ENCODE measurements at regions of chr2 and their contacts with region 1.

Region 1: DNA sequence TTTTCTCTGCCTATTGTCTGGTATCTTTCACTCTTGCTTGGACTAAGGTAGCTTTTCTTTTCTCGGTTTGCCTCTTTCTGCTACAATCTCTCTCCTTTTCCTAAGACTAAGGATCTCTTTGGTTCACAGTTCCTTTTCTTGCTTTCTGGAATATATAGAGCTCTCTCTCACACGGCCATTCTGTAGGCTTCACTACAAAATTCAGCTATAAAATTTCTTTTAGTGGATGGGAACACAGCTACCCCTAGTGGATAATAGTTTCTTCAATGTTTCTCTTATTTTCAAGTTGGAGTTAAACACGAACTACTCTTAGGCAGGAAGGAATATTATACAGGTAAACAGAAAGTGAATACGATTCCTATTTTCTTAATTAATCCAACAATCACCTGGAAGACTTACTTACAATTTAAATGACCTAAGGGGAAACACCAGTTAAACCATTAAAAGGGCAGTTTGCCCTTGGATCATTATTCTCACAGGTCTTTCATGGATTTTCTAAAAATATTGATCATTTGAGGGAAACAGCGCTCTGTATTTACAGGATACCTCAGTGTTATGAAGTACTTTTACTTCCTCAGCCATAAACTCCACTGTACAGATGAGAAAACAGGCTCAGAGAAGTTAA is 140.5 kb downstream of the LRP2 start:
- DNase-seq: peak in 1 of 5 donors; percentile 15
- H3K4me3 ChIP-seq: no peak overlapping the region
- H3K4me3 Mint-ChIP-seq: no peak overlapping the region
- H3K27ac ChIP-seq: no peak overlapping the region
- H3K27ac Mint-ChIP-seq: no peak overlapping the region
- H3K4me1 ChIP-seq: no peaks in the 10 kb centered on the region
- H3K4me1 Mint-ChIP-seq: peaks cover 0 to 4% (median 0%) of the 10 kb centered on the region in 4 donors
- H3K27me3 ChIP-seq: no peaks in the 10 kb centered on the region
- H3K27me3 Mint-ChIP-seq: peaks cover 0 to 1% of the 10 kb centered on the region in 2 donors

Region 2: GRCh38 chr2:168948621-168949212 is 273.1 kb before region 1 on chr2:
- CTCF ChIA-PET with region 1: no interaction called
- POLR2A ChIA-PET with region 1: no interaction called
- intact Hi-C with region 1: loop called (anchors 5 kb)
- DNase-seq: peak in 2 of 5 donors; percentile 14 to 19
- H3K4me3 ChIP-seq: no peak overlapping the region
- H3K4me3 Mint-ChIP-seq: no peak overlapping the region
- H3K27ac ChIP-seq: no peak overlapping the region
- H3K27ac Mint-ChIP-seq: no peak overlapping the region
- H3K4me1 ChIP-seq: no peaks in the 10 kb centered on the region
- H3K4me1 Mint-ChIP-seq: no peaks in the 10 kb centered on the region
- H3K27me3 ChIP-seq: no peaks in the 10 kb centered on the region
- H3K27me3 Mint-ChIP-seq: peaks cover 0 to 3% of the 10 kb centered on the region in 2 donors

Region 3: DNA sequence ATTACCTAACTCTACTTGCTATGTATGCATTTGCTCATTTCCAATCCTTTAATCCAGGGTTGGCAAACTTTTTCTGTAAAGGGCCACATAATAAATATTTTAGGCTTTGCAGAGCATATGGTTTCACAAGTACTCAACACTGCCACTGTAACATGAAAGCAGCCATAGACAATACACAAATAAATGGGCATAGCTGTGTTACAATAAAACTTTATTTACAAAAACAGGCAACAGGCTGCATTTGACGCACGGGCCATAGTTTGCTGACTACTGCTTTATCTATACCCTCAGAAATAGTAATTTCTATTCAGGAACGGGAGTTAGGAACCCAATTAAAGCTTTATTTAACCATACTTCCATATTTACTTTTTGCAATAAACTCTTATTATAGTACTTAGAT is 13.8 kb before region 1 on chr2:
- CTCF ChIA-PET with region 1: interaction called, 22 read pairs
- POLR2A ChIA-PET with region 1: no interaction called
- intact Hi-C with region 1: no loop called
- DNase-seq: no peak
- H3K4me3 ChIP-seq: no peak overlapping the region
- H3K4me3 Mint-ChIP-seq: no peak overlapping the region
- H3K27ac ChIP-seq: no peak overlapping the region
- H3K27ac Mint-ChIP-seq: no peak overlapping the region
- H3K4me1 ChIP-seq: no peaks in the 10 kb centered on the region
- H3K4me1 Mint-ChIP-seq: no peaks in the 10 kb centered on the region
- H3K27me3 ChIP-seq: no peaks in the 10 kb centered on the region
- H3K27me3 Mint-ChIP-seq: peaks cover 3 to 4% of the 10 kb centered on the region in 2 donors